Left cardiac atrium (tissue), 4 donors: ENCODE measurements at regions of chr13 and their contacts with region 1.

Region 1: DNA sequence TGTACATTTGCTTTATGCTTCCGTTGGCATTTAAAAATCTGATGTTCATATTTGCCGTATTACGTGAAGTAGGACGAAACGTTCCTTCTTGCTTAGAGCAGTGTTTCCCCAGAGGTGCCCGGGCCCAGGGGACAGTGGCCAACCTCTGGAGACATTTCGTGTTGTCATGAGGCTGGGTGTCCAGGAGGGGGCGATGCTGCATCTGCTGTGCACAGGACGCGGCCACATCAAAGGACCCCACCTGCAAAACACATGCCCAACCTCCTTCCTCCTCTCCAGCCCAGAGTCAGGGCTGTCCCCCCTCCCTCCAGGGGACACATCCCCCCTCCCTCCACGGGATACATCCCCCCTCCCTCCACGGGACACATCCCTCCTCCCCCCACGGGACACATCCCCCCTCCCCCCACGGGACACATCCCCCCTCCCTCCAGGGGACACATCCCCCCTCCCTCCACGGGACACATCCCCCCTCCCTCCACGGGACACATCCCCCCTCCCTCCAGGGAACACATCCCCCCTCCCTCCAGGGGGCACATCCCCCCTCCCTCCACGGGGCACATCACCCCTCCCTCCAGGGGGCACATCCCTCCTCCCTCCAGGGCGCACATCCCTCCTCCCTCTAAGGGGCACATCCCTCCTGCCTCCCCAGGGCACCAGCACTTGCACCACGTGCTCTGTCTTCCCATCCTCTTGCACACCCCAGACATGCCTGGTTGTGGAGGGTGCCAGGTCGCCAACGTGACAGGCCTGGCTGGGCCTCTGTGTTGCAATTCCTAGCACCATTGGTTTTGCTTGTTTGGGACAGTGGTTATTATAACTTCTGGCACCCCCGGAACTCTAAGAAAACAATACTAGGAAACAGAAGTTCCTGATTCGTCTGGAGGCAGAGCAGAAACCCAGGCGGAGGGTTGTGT is 46.7 kb downstream of the GAS6 start:
- DNase-seq: peak; percentile 91
- ATAC-seq: peak; percentile 33 to 66

Region 2: GRCh38 chr13:113758651-113759524 is 58.3 kb before region 1 on chr13 and contains the start of gene TMEM255B:
- intact Hi-C with region 1: loop called in 1 of 2 experiments (anchors 2 kb)
- DNase-seq: peak; percentile 89
- ATAC-seq: peak; percentile 97 to 99
- total RNA-seq, gene TMEM255B: 10.5 to 14.1 TPM

Region 3: DNA sequence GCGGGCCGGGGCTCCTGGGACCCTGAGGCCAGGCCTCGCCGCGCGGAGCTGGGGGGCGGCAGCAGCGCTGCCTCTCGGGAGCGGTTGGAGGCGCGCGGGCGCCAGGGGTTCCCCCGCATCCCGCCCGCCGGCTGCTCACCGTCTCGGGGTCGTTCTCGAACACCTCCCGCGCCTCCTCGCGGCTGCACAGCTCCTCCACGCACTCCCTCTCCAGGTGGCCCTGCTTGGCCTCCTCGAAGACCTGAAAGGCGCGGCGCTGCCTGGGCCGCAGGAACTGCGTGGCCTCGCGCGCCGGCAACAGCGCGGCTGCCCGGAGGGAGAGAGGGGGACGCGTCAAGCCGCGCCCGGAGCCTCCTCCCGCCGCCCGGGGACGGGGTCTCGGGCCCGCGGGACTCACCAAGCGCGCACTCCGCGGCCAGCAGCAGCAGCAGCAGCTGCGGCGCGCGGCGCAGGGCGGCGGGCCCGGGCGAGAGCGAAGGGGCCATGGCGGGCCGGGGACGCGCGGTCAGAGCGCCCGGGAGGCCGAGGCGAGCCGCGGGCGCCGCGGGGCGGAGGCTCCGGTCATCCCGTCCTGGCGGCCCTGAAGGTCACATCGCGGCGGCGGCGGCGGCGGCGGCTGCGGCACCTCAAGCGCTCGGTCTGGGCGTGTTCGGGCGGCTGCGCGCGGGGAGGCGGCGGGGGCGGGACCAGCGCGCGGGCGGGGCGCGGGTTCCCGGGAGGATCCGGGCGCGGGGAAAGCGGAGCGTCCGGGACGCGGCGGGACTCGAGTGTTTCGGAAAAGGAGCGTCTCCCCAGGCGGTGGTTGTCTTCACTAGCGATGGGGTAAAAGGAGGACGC is 46.5 kb after region 1 on chr13 and contains the start of gene GAS6:
- intact Hi-C with region 1: loop called in 1 of 2 experiments (anchors 5 kb)
- DNase-seq: peak; percentile 72
- ATAC-seq: peak; percentile 56 to 72
- total RNA-seq, gene GAS6: 165 to 175 TPM

Region 4: DNA sequence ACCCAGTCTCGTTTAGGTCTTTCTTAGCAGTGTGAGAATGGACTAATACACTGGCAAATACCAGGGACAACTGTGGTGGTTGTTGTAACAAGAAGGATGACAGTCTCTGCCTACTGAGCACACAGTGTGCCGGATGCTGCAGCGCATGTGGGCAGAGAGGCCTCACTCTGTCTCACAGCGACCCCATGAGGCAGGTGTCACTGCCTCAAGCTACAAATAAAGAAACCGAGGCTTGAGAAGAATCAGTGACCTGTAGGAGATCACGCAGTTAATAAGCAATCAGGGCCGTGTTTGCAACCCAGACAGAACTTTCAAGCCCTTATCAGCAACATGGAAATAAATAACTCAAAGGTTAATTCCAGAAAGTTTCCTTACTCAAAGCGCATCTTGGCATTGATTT is 87.2 kb after region 1 on chr13:
- intact Hi-C with region 1: loop called (anchors 2 to 5 kb)
- DNase-seq: peak; percentile 77
- ATAC-seq: peak; percentile 80 to 88

Region 5: DNA sequence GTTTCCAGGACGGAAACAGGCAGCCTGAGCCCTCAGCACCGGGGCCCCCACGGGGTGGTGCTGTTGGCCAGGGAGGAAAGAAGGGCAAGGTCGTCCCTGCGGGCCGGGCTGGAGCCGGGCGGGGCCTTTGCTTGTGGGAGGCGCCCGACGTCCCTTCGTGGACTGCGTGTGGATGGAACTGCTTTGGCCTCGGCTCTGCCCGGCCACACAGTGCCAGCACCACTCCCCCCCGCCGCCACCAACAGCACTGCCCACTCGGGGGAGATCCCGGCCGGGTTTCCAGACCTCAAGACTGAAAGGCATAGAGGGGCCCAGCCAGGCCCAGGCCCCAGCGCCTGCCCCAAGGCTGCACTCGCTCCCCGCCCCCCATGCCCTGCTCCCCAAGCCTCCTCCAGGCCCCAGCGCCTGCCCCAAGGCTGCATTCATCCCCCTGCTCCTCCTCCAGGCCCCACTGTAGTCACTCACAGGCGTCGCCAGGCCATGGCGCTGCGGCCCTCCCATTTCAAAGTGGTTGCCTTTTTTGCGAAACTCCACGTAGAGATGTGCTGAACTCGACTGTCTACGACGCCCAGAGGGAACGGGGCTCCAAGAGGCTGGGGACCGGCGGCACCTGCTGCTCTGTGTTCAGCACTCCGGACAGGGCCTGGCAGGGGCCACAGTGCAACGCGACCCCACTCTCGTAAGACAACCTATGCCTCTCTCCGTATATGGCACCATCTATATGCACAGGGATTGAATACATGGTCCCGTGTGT is 134.2 kb after region 1 on chr13:
- intact Hi-C with region 1: loop called in 1 of 2 experiments (anchors 2 kb)
- DNase-seq: peak; percentile 90
- ATAC-seq: peak; percentile 93 to 94

Region 6: GRCh38 chr13:114226699-114227323 is 409.6 kb after region 1 on chr13:
- intact Hi-C with region 1: loop called in 1 of 2 experiments (anchors 2 kb)
- DNase-seq: peak; percentile 84
- ATAC-seq: peak; percentile 87 to 93